ENCODE measurements at regions of chr2 and their contacts with region 1.

Region 1: GRCh38 chr2:66897181-66897580 is 462.3 kb downstream of the MEIS1 start:
- DNase-seq: peak; percentile 65
- ATAC-seq: peak; percentile 56
- H3K4me3 ChIP-seq: no peak overlapping the region
- H3K27ac ChIP-seq: peak overlapping the region; percentile 99
- H3K4me1 ChIP-seq: peaks cover 19% of the 10 kb centered on the region
- H3K27me3 ChIP-seq: no peaks in the 10 kb centered on the region
- CTCF ChIP-seq: no peak
- POLR2A ChIP-seq: no peak
- RAD21 ChIP-seq: no peak

Region 2: GRCh38 chr2:66109419-66109818 is 787.8 kb before region 1 on chr2:
- CTCF ChIA-PET with region 1: no interaction called
- POLR2A ChIA-PET with region 1: no interaction called
- dilution Hi-C with region 1: no loop called
- in situ Hi-C with region 1: no loop called
- intact Hi-C with region 1: no loop called
- DNase-seq: no peak
- ATAC-seq: no peak
- H3K4me3 ChIP-seq: no peak overlapping the region
- H3K27ac ChIP-seq: no peak overlapping the region
- H3K4me1 ChIP-seq: no peaks in the 10 kb centered on the region
- H3K27me3 ChIP-seq: no peaks in the 10 kb centered on the region
- CTCF ChIP-seq: no peak
- POLR2A ChIP-seq: no peak
- RAD21 ChIP-seq: no peak

Region 3: GRCh38 chr2:67397143-67397986 is 500.2 kb after region 1 on chr2 and contains the start of gene ETAA1:
- CTCF ChIA-PET with region 1: no interaction called
- POLR2A ChIA-PET with region 1: no interaction called
- dilution Hi-C with region 1: no loop called
- in situ Hi-C with region 1: no loop called
- intact Hi-C with region 1: loop called (anchors 10 kb)
- DNase-seq: peak; percentile 90
- ATAC-seq: peak; percentile 96
- H3K4me3 ChIP-seq: peak within 1 kb of the TSS; percentile 87
- H3K27ac ChIP-seq: peak within 1 kb of the TSS; percentile 96
- H3K4me1 ChIP-seq: peaks cover 9% of the 10 kb centered on the region
- H3K27me3 ChIP-seq: no peaks in the 10 kb centered on the region
- CTCF ChIP-seq: no peak
- POLR2A ChIP-seq: peak; percentile 83
- RAD21 ChIP-seq: peak; percentile 25
- total RNA-seq, gene ETAA1: 8.1 and 19.2 TPM in 2 replicates

Region 4: GRCh38 chr2:67772216-67773170 is 875.3 kb after region 1 on chr2:
- CTCF ChIA-PET with region 1: no interaction called
- POLR2A ChIA-PET with region 1: no interaction called
- dilution Hi-C with region 1: no loop called
- in situ Hi-C with region 1: no loop called
- intact Hi-C with region 1: loop called (anchors 5 kb)
- DNase-seq: no peak
- ATAC-seq: no peak
- H3K4me3 ChIP-seq: no peak overlapping the region
- H3K27ac ChIP-seq: no peak overlapping the region
- H3K4me1 ChIP-seq: no peaks in the 10 kb centered on the region
- H3K27me3 ChIP-seq: no peaks in the 10 kb centered on the region
- CTCF ChIP-seq: no peak
- POLR2A ChIP-seq: no peak
- RAD21 ChIP-seq: no peak

Measured in IMR-90 (cell line).